ENCODE measurements at regions of chr14 and their contacts with region 1.

Region 1: DNA sequence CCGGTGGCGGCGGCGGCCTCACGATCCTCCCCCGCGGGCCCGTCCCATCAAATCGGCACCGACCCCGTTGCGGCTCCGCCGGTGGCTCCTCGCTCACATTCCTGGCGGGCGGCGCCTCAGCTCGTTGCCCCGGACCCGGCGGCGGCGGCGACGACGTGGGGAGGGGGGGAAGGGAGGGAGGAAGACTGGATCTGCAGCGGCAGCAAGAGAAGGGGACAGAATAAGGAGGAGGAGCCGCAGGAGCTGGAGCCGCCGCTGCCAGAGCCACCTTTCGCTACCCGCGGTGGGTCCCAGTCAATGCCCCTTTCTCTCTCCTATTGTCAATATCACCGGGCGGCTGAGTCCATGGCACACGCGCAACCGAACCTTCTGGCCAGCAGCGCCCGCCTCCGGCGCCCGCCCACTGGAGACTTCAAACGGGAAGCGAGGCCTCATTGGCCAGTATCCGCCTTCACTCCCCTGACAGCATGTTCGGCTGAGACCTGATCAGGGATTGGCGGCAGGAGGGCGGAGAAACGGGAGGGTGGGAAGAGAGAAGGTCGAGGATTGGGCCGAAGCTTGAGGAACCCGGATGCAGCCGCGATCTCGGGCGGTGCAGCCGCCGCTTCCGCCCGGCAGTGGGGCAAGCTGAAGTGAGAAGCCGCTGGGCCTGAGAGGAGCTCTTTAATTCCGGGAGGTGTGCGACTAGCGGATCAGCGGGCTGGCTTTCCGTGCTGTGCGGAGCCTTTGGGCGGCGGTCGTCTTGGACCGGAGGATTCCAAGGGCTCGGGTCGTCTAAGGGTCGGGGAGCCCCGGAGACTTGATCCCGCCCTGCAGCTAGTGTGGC is at the start of gene PPP2R5E:
- DNase-seq: peak; percentile 98 to 99
- H3K4me3 ChIP-seq: peak within 1 kb of the TSS; percentile 85
- H3K4me3 Mint-ChIP-seq: peak within 1 kb of the TSS; percentile 86
- H3K27ac Mint-ChIP-seq: peak within 1 kb of the TSS; percentile 89
- H3K4me1 ChIP-seq: peaks cover 16% of the 10 kb centered on the region
- H3K4me1 Mint-ChIP-seq: peaks cover 25% of the 10 kb centered on the region
- H3K27me3 ChIP-seq: no peaks in the 10 kb centered on the region
- H3K27me3 Mint-ChIP-seq: no peaks in the 10 kb centered on the region
- CTCF ChIP-seq: no peak
- total RNA-seq, gene PPP2R5E: 56.6 and 58.6 TPM in 2 replicates

Region 2: DNA sequence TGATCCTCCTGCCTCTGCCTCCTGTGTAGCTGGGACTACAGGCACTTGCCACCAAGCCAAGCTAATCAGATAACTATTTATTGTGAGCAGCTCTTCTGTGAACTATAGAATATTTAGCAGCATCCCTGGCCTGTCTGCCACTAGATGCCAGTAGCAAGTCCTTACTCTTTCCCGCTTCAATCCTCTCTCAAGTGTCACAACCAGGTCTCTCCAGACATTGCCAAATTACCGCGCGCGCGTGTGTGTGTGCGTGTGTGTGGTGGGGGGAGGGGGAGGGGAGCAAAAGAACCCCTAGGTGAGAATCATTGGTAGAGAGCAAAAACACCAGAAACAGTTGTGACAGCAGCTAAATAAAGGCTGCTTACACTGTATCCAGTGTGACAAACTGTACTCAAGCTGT is 50.0 kb before region 1 on chr14:
- CTCF ChIA-PET with region 1: interaction called, 4 read pairs
- POLR2A ChIA-PET with region 1: no interaction called
- intact Hi-C with region 1: loop called (anchors 5 kb)
- DNase-seq: peak in 1 of 2 experiments; percentile 52
- H3K4me3 ChIP-seq: no peak overlapping the region
- H3K4me3 Mint-ChIP-seq: no peak overlapping the region
- H3K27ac Mint-ChIP-seq: no peak overlapping the region
- H3K4me1 ChIP-seq: no peaks in the 10 kb centered on the region
- H3K4me1 Mint-ChIP-seq: peaks cover 7% of the 10 kb centered on the region
- H3K27me3 ChIP-seq: no peaks in the 10 kb centered on the region
- H3K27me3 Mint-ChIP-seq: no peaks in the 10 kb centered on the region
- CTCF ChIP-seq: peak in 1 of 2 experiments; percentile 40

Region 3: DNA sequence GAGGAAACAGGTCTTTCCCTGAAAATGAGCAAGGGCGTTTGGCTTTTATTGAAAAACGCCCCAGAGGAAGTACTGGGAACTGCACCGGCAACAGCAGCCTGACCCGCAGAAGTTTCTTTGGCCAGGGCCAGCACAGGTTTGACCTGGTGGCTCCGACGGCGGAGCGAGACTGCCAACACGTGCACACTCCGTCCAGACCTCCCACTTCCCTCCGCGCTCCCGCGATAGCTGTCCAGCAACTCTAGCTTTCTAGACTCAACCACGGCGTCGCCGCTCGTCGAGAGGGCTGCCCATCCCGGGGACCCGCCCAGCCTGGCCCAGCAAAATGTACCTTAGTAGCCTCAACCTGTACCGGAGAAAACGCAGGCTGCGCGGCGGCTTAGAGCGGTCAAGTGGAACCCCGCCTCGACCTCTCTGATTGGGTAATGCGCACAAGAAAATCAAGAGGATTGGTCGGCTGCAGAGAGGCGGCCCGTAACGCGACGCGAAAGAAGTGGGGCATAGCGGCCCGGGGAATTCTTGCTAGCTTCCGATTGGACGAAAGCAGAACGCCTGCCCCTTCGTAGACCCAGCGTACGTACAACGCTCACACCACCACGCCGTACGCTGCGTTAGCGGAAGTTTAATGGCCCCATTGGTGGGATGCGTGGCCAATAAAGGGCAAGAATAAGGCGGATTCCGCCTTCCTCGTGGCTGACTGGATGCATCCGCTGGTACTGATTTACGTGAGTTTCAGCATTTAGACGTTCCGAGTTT is 98.4 kb after region 1 on chr14 and contains the start of gene WDR89:
- CTCF ChIA-PET with region 1: interaction called, 4 read pairs
- POLR2A ChIA-PET with region 1: interaction called, 20 read pairs
- intact Hi-C with region 1: loop called (anchors 1 kb)
- DNase-seq: peak; percentile 97 to 99
- H3K4me3 ChIP-seq: peak within 1 kb of the TSS; percentile 67
- H3K4me3 Mint-ChIP-seq: peak within 1 kb of the TSS; percentile 88
- H3K27ac Mint-ChIP-seq: peak within 1 kb of the TSS; percentile 96
- H3K4me1 ChIP-seq: no peaks in the 10 kb centered on the region
- H3K4me1 Mint-ChIP-seq: no peaks in the 10 kb centered on the region
- H3K27me3 ChIP-seq: no peaks in the 10 kb centered on the region
- H3K27me3 Mint-ChIP-seq: no peaks in the 10 kb centered on the region
- CTCF ChIP-seq: peak; percentile 77 to 85
- total RNA-seq, gene WDR89: 14.4 and 16.6 TPM in 2 replicates

Region 4: GRCh38 chr14:63770187-63770807 is 227.1 kb after region 1 on chr14:
- CTCF ChIA-PET with region 1: no interaction called
- POLR2A ChIA-PET with region 1: no interaction called
- intact Hi-C with region 1: loop called (anchors 5 kb)
- DNase-seq: peak in 1 of 2 experiments; percentile 54
- H3K4me3 ChIP-seq: no peak overlapping the region
- H3K4me3 Mint-ChIP-seq: no peak overlapping the region
- H3K27ac Mint-ChIP-seq: no peak overlapping the region
- H3K4me1 ChIP-seq: peaks cover 4% of the 10 kb centered on the region; the same call in 1 of the 2 replicates
- H3K4me1 Mint-ChIP-seq: peaks cover 7% of the 10 kb centered on the region
- H3K27me3 ChIP-seq: no peaks in the 10 kb centered on the region
- H3K27me3 Mint-ChIP-seq: no peaks in the 10 kb centered on the region
- CTCF ChIP-seq: peak; percentile 59 to 69